PC-3 (cell line): ENCODE measurements at regions of chr3 and their contacts with region 1.

Region 1: GRCh38 chr3:9525078-9525477 is 28.5 kb downstream of the LHFPL4 start:
- DNase-seq: no peak
- ATAC-seq: no peak
- H3K4me3 ChIP-seq: no peak overlapping the region
- H3K27ac ChIP-seq: no peak overlapping the region
- H3K4me1 ChIP-seq: no peaks in the 10 kb centered on the region
- H3K27me3 ChIP-seq: peaks cover 56% of the 10 kb centered on the region
- CTCF ChIP-seq: no peak

Region 2: GRCh38 chr3:9630550-9631139 is 105.6 kb after region 1 on chr3:
- CTCF ChIA-PET with region 1: no interaction called
- POLR2A ChIA-PET with region 1: no interaction called
- intact Hi-C with region 1: loop called (anchors 5 kb)
- DNase-seq: no peak
- ATAC-seq: no peak
- H3K4me3 ChIP-seq: no peak overlapping the region
- H3K27ac ChIP-seq: no peak overlapping the region
- H3K4me1 ChIP-seq: no peaks in the 10 kb centered on the region
- H3K27me3 ChIP-seq: no peaks in the 10 kb centered on the region
- CTCF ChIP-seq: no peak